ENCODE measurements at regions of chr7 and their contacts with region 1.

Region 1: GRCh38 chr7:145169942-145170341 is 334.1 kb upstream of the TPK1 start:
- DNase-seq: no peak
- H3K4me3 ChIP-seq: no peak overlapping the region
- H3K27ac ChIP-seq: no peak overlapping the region
- H3K4me1 ChIP-seq: no peaks in the 10 kb centered on the region
- H3K27me3 ChIP-seq: no peaks in the 10 kb centered on the region
- CTCF ChIP-seq: no peak
- EP300 ChIP-seq: no peak
- POLR2A ChIP-seq: no peak

Region 2: GRCh38 chr7:144747936-144748335 is 422.0 kb before region 1 on chr7:
- intact Hi-C with region 1: loop called in 1 of 4 experiments (anchors 5 kb)
- DNase-seq: no peak
- H3K4me3 ChIP-seq: no peak overlapping the region
- H3K27ac ChIP-seq: no peak overlapping the region
- H3K4me1 ChIP-seq: no peaks in the 10 kb centered on the region
- H3K27me3 ChIP-seq: no peaks in the 10 kb centered on the region
- CTCF ChIP-seq: no peak
- EP300 ChIP-seq: no peak
- POLR2A ChIP-seq: no peak

Measured in ovary (tissue), 10 donors.